Tibial artery (tissue), 4 donors: ENCODE measurements at regions of chr14 and their contacts with region 1.

Region 1: GRCh38 chr14:37874429-37875191 is 279.2 kb downstream of the TTC6 start:
- DNase-seq: peak; percentile 66 to 77
- H3K4me3 ChIP-seq: no peak overlapping the region
- H3K27ac ChIP-seq: no peak overlapping the region
- H3K4me1 ChIP-seq: peaks cover 0 to 3% (median 0%) of the 10 kb centered on the region in 4 donors
- H3K27me3 ChIP-seq: no peaks in the 10 kb centered on the region
- CTCF ChIP-seq: peak; percentile 74 to 75

Region 2: GRCh38 chr14:37709419-37710195 is 165.0 kb before region 1 on chr14:
- intact Hi-C with region 1: loop called (anchors 5 kb)
- DNase-seq: no peak
- H3K4me3 ChIP-seq: no peak overlapping the region
- H3K27ac ChIP-seq: no peak overlapping the region
- H3K4me1 ChIP-seq: no peaks in the 10 kb centered on the region
- H3K27me3 ChIP-seq: no peaks in the 10 kb centered on the region
- CTCF ChIP-seq: peak in 1 of 2 experiments; percentile 25